Ovary (tissue), 10 donors: ENCODE measurements at regions of chr11 and their contacts with region 1.

Region 1: GRCh38 chr11:13962562-13963168 is at the start of gene SPON1:
- DNase-seq: peak; percentile 33 to 75 (median 68)
- H3K4me3 ChIP-seq: peak within 1 kb of the TSS; percentile 53
- H3K27ac ChIP-seq: peak within 1 kb of the TSS; percentile 54 to 59
- H3K4me1 ChIP-seq: peaks cover 2% of the 10 kb centered on the region
- H3K27me3 ChIP-seq: no peaks in the 10 kb centered on the region
- CTCF ChIP-seq: peak in 1 of 3 donors; percentile 17
- EP300 ChIP-seq: no peak
- POLR2A ChIP-seq: no peak
- total RNA-seq, gene SPON1: 11.9 to 112 (median 56.4) TPM

Region 2: GRCh38 chr11:13661074-13661623 is 301.5 kb before region 1 on chr11:
- intact Hi-C with region 1: no loop called
- DNase-seq: no peak
- H3K4me3 ChIP-seq: no peak overlapping the region
- H3K27ac ChIP-seq: no peak overlapping the region
- H3K4me1 ChIP-seq: no peaks in the 10 kb centered on the region
- H3K27me3 ChIP-seq: no peaks in the 10 kb centered on the region
- CTCF ChIP-seq: no peak
- EP300 ChIP-seq: no peak
- POLR2A ChIP-seq: no peak

Region 3: GRCh38 chr11:14029971-14030920 is 67.6 kb after region 1 on chr11:
- intact Hi-C with region 1: loop called in 1 of 4 experiments (anchors 10 kb)
- DNase-seq: peak; percentile 59 to 88 (median 82)
- H3K4me3 ChIP-seq: no peak overlapping the region
- H3K27ac ChIP-seq: peak overlapping the region; percentile 34 to 44
- H3K4me1 ChIP-seq: peaks cover 15% of the 10 kb centered on the region
- H3K27me3 ChIP-seq: no peaks in the 10 kb centered on the region
- CTCF ChIP-seq: no peak
- EP300 ChIP-seq: no peak
- POLR2A ChIP-seq: no peak